ENCODE measurements at regions of chr3 and their contacts with region 1.

Region 1: GRCh38 chr3:25306066-25306465 is 122.0 kb upstream of the RARB start:
- DNase-seq: no peak
- ATAC-seq: no peak
- H3K4me3 ChIP-seq: no peak overlapping the region
- H3K4me3 Mint-ChIP-seq: no peak overlapping the region
- H3K27ac ChIP-seq: no peak overlapping the region
- H3K27ac Mint-ChIP-seq: no peak overlapping the region
- H3K4me1 ChIP-seq: no peaks in the 10 kb centered on the region
- H3K4me1 Mint-ChIP-seq: no peaks in the 10 kb centered on the region
- H3K27me3 ChIP-seq: no peaks in the 10 kb centered on the region
- H3K27me3 Mint-ChIP-seq: no peaks in the 10 kb centered on the region

Region 2: GRCh38 chr3:24215502-24215901 is 1090.6 kb before region 1 on chr3:
- CTCF ChIA-PET with region 1: no interaction called
- POLR2A ChIA-PET with region 1: interaction called in 1 of 2 experiments, 13 read pairs
- DNase-seq: no peak
- ATAC-seq: no peak
- H3K4me3 ChIP-seq: no peak overlapping the region
- H3K4me3 Mint-ChIP-seq: no peak overlapping the region
- H3K27ac ChIP-seq: no peak overlapping the region
- H3K27ac Mint-ChIP-seq: no peak overlapping the region
- H3K4me1 ChIP-seq: no peaks in the 10 kb centered on the region
- H3K4me1 Mint-ChIP-seq: no peaks in the 10 kb centered on the region
- H3K27me3 ChIP-seq: no peaks in the 10 kb centered on the region
- H3K27me3 Mint-ChIP-seq: peaks cover 0 to 4% of the 10 kb centered on the region in 2 donors